MCF 10A (cell line): ENCODE measurements at regions of chr13 and their contacts with region 1.

Region 1: DNA sequence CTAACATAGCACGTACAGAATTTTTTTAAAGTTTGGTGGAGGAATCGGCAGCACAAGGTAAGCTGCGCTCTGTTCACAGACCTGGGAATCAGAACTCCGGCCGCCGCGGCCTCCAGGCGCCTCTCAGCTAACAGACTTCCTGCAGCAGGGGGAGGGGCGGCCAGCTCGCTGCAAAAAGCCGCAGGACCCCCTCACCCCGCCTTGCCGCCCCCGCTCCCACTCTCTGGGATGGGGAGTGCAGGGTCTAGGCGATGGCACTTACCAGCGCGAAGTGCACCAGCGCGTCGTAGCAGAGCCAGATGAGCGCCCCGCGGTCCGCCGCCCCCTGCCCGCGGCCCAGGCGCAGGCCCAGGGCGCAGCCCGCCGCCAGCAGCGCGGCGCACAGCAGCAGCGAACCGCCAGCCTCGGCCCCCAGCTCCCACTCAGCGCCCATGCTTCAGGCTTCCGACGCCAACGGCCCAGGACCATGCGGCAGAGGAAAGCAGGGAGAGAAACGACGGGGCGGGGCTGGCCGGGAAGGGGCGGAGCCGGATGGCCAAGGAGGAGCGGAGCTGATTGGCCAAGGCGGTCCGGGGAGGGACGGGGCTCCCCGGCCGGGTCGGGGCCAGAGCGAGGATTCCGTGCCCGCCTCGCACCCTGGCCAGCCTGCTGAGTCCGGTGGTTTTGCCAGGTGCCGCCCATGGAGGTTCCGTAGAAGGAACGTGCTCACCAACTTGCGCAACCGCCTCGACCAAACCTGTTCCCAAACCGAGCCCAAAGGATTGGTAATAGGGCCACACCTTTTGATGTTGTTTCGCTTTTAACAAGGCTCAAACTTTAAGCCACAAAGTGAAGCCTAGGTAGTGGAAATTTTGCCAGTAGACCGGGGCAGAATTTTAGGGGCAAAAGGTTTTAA is at the start of gene EBPL:
- DNase-seq: peak; percentile 97
- H3K4me3 Mint-ChIP-seq: peak within 1 kb of the TSS; percentile 94
- H3K27ac Mint-ChIP-seq: peak within 1 kb of the TSS; percentile 97
- H3K4me1 Mint-ChIP-seq: peaks cover 34% of the 10 kb centered on the region
- H3K27me3 Mint-ChIP-seq: no peaks in the 10 kb centered on the region
- CTCF ChIP-seq: no peak
- total RNA-seq, gene EBPL: 90.1 and 121 TPM in 2 replicates

Region 2: DNA sequence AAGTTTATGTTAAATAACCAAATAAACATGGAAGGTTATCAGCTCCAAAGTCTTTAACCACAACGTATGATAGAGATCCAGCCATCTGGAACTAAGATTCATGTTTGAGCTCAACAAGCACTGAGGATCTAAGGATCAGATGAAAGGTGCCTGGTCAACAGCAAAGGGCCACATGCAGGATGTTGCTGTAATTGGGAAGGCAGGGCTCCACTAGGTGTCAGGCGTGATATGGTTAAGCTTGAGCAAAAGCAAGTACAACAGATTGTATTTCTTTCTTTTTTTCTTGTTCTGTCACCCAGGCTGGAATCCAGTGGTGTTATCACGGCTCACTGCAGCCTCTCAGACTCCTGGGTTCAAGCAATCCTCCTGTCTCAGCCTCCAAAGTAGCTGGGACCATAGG is 12.0 kb before region 1 on chr13:
- CTCF ChIA-PET with region 1: interaction called, 7 read pairs
- POLR2A ChIA-PET with region 1: interaction called, 14 read pairs
- intact Hi-C with region 1: no loop called
- DNase-seq: peak; percentile 16
- H3K4me3 Mint-ChIP-seq: no peak overlapping the region
- H3K27ac Mint-ChIP-seq: peak overlapping the region; percentile 71
- H3K4me1 Mint-ChIP-seq: peaks cover 8% of the 10 kb centered on the region
- H3K27me3 Mint-ChIP-seq: no peaks in the 10 kb centered on the region
- CTCF ChIP-seq: peak; percentile 35

Region 3: DNA sequence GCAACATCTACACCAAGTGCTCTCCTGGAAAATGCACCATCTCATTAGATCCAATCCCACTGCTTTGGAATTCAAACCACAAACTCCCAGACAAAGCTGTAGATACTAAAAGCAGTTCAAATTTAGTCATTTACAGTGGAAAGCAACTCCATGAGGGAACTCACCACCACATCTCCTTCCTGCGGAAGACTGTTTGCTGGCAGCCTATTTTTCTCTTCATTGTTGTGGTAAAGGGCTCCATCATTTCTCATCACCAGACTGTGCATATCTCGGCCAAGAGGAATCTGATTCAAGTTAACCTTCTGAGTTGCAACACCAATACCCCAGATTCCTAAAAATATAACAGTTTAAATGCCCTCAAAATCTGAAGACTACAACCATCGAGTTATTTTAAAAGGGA is 236.5 kb after region 1 on chr13:
- CTCF ChIA-PET with region 1: no interaction called
- POLR2A ChIA-PET with region 1: no interaction called
- intact Hi-C with region 1: no loop called
- DNase-seq: no peak
- H3K4me3 Mint-ChIP-seq: no peak overlapping the region
- H3K27ac Mint-ChIP-seq: no peak overlapping the region
- H3K4me1 Mint-ChIP-seq: no peaks in the 10 kb centered on the region
- H3K27me3 Mint-ChIP-seq: no peaks in the 10 kb centered on the region
- CTCF ChIP-seq: no peak